Activated naive CD4-positive, alpha-beta T cell treated with anti-CD3 and anti-CD28 coated beads, Interleukin-2, amount 10 ng/mL, durations not matched to agents 7 days and 5 days (primary cell): ENCODE measurements at regions of chr15 and their contacts with region 1.

Region 1: DNA sequence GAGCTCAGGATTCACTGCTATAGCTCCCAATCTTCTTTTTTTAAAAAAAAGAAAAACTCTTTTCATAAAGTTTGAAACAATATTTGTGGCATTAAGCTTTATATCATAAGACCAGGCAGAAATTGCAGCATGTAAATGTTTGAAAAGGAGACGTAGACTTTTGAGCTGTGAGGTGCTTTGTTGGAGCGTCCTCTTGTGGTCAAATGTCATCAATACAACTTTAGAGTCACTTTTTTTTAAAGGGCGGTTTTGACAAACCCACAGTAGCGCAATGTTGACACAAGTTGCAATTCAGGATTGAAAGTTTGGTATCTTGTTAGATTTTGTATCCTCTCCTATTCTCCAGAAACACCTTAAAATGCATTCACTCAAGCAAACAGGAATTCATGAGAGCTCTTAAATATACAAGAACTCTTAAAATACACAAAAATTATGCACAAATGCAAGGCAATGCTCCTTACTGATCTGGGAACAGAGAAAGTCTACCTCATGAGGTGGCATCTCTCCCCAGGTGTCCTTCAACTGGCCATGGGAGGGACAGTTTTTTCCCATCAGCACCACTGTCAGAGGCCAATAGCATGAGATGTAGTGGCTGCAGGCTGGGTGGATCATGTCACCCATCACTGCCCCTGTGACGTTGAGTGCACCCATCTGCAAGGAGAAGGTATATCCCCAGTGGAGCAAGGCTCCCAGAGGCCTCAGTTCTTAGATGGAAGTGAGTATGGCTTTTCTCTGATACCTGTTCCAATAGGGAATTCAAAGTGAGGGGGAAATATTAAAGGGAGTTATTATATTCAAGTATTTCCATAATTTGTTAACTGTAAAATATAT is 70.7 kb downstream of the ANXA2 start:
- DNase-seq: peak; percentile 49
- H3K4me3 Mint-ChIP-seq: no peak overlapping the region
- H3K27ac Mint-ChIP-seq: no peak overlapping the region
- H3K4me1 Mint-ChIP-seq: peaks cover 11% of the 10 kb centered on the region
- H3K27me3 Mint-ChIP-seq: peaks cover 55% of the 10 kb centered on the region

Region 2: DNA sequence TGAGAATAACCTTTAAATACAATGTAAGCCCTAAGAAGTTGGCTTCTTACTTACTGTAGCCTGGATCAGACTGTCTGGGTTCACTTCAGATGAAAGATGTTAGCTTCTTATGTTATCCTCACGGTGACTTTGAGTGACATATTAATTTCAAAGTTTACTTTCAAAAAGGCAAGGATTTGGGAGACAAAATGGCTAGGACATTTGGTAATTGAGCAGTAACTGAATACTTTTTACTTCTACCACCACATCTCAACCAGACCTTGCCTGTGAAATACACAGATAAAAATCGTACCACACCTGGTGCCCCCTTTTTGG is 601.9 kb before region 1 on chr15:
- CTCF ChIA-PET with region 1: interaction called, 37 read pairs
- DNase-seq: no peak
- H3K4me3 Mint-ChIP-seq: no peak overlapping the region
- H3K27ac Mint-ChIP-seq: no peak overlapping the region
- H3K4me1 Mint-ChIP-seq: no peaks in the 10 kb centered on the region
- H3K27me3 Mint-ChIP-seq: peaks cover 4% of the 10 kb centered on the region

Region 3: GRCh38 chr15:59751552-59752413 is 575.3 kb before region 1 on chr15:
- CTCF ChIA-PET with region 1: interaction called, 20 read pairs
- DNase-seq: no peak
- H3K4me3 Mint-ChIP-seq: no peak overlapping the region
- H3K27ac Mint-ChIP-seq: no peak overlapping the region
- H3K4me1 Mint-ChIP-seq: peaks cover 16% of the 10 kb centered on the region
- H3K27me3 Mint-ChIP-seq: peaks cover 24% of the 10 kb centered on the region

Region 4: DNA sequence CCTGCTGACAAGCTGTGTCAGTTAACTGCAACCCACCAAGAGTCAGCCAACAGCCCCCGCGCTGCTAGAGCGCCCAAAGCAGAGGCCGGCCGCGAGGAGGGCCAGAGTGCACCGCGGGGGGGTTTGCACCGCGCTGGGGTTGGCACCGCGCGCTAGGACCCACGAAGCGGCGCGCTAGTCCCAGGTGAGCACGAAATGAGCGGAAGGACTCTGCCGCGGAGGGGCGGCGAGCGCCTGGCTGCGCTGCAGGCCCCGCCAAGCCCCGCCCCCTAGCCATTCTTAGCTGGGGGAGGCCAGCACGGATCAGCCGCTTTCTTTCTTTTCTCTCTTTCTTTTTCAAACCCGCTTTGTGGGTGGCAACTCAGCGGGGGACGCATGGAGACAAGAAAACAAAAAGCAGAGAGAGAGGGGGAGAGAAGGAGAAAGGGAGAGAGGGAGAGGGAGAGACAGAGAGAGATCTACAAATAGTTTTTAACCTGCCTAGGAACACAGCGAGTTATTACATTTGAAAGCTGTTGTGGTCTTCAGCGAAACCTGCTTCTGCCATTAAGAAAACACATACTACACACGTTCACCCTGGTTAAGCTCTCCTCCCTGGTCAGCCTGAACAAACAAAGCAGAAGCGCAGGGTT is 329.9 kb before region 1 on chr15:
- CTCF ChIA-PET with region 1: interaction called, 13 read pairs
- DNase-seq: peak; percentile 85
- H3K4me3 Mint-ChIP-seq: peak overlapping the region; percentile 77
- H3K27ac Mint-ChIP-seq: peak overlapping the region; percentile 65
- H3K4me1 Mint-ChIP-seq: peaks cover 76% of the 10 kb centered on the region
- H3K27me3 Mint-ChIP-seq: peaks cover 100% of the 10 kb centered on the region

Region 5: DNA sequence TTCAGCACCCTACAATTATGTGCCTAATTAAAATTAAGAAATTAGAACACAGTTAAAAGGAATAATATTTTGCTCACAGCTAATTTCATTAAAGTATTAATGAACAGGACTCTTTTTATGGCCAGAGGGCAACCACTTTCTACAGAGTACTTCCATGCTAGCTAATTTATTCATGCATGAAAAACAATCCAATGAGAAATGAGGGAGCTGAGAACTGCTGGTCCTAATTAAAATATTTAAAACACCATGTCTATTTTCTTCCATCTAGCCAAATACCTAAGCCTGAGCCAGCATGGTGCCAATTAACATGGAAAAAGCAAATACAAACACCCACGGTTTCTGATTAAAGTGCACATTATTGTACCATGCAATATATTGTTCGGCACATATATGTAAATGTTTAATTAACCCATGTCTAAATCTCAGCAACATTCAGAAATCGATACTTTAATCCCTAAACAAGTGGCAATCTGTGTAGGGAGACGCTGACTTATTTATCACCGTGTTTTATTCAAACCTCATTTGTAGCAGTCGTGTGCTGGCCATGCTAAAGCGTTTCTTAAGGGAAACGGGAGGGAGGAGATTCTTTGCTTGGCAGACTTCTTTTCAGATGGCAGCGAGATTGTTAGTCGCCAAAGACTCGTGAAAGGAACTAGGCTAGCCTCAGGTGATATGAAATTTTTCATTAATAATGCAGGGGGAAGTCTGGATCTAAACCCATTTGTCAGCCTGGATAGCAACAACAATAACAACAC is 122.7 kb before region 1 on chr15:
- CTCF ChIA-PET with region 1: no interaction called
- DNase-seq: no peak
- H3K4me3 Mint-ChIP-seq: no peak overlapping the region
- H3K27ac Mint-ChIP-seq: no peak overlapping the region
- H3K4me1 Mint-ChIP-seq: no peaks in the 10 kb centered on the region
- H3K27me3 Mint-ChIP-seq: peaks cover 31% of the 10 kb centered on the region

Region 6: DNA sequence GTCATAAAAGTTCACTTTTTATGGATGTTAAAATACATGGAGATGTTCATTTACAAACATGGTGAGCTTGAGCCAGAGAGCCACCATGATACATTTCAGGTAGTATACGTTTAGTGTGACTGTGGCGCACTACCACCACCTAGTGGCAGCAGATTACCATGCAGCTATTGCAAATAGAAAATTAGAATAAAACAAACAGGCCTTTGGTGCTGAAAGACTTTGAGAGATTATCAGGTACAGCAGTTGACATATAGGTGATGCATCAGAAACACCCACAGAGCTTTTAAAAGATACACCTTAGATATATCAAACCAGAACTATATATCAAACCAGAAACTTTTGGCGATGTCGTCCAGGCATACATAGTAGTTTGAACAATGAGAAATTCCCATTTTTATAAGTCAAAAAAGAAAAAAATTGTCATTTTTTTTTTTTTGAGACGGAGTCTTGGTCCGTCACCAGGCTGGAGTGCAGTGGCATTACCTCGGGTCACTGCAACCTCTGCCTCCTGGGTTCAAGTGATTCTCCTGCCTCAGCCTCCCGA is 193.9 kb after region 1 on chr15:
- CTCF ChIA-PET with region 1: interaction called, 20 read pairs
- DNase-seq: peak; percentile 87
- H3K4me3 Mint-ChIP-seq: no peak overlapping the region
- H3K27ac Mint-ChIP-seq: peak overlapping the region; percentile 2
- H3K4me1 Mint-ChIP-seq: peaks cover 30% of the 10 kb centered on the region
- H3K27me3 Mint-ChIP-seq: no peaks in the 10 kb centered on the region